GM10248 (cell line): ENCODE measurements at regions of chr17 and their contacts with region 1.

Region 1: GRCh38 chr17:3804503-3804931 is 3.5 kb upstream of the ITGAE start:
- DNase-seq: peak; percentile 78
- CTCF ChIP-seq: no peak

Region 2: DNA sequence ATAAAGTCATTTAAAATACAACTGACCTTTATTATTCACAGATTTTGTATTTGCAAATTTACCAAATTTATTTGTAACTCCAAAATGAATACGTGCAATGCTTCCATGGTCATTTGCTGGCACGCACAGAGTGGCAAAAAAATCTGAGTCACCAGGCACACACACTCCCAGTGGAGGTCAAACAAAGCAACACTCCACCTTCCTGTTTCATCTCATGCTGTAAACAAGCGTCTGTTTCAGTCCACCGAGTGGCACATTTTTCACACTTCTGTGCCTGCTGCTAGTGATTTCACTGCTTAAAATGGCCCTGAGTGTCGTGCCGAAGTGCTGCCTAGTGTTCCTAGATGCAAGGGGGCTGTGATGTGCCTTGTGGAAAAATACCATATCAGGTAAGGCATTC is 14.3 kb after region 1 on chr17:
- CTCF ChIA-PET with region 1: interaction called, 14 read pairs
- POLR2A ChIA-PET with region 1: interaction called, 4 read pairs
- DNase-seq: no peak
- CTCF ChIP-seq: no peak

Region 3: GRCh38 chr17:4594931-4595684 is 790.6 kb after region 1 on chr17:
- CTCF ChIA-PET with region 1: no interaction called
- POLR2A ChIA-PET with region 1: no interaction called
- DNase-seq: peak; percentile 66
- CTCF ChIP-seq: peak; percentile 25